Endothelial cell of umbilical vein (primary cell): ENCODE measurements at regions of chr2 and their contacts with region 1.

Region 1: DNA sequence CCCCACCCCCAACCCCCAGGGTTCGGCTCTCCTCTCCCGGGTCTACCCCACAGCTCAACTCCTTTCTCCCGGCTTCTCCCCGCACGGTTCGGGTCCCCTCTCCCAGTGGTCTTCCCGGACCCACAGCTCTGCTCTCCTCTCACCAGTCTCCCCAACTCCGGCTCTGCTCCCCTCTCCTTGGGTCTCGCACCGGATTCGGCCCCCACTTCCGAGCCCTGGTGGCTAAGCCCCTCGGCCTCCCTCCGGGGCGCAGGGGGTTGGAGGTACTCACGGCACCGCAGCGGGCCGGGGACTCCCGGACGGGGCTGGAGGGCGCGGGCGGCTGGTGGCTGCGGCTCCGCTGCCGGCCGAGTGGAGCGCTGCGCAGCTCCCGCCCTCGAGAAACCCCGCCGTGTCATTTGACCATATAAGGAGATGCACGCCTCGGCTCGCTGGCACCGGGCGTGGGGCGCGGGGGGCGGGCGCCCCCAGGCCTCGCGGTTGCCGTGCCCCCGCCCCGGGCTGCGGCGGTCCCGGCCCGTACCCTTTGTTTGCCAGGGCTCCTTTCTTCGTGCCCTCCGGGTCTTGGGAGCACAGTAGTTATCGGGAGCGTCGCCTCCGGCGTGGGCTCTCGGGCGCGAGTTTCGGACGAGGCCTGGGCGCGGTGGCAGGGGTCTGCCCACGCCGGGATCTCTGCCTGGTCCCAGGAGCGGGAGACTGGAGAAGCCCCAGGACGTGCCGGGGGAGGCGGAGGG is at the start of gene FHL2:
- DNase-seq: peak; percentile 77
- H3K4me3 ChIP-seq: peak within 1 kb of the TSS; percentile 59 to 99 (median 99)
- H3K27ac ChIP-seq: peak within 1 kb of the TSS; percentile 92
- H3K4me1 ChIP-seq: peaks cover 43% of the 10 kb centered on the region
- H3K27me3 ChIP-seq: no peaks in the 10 kb centered on the region
- CTCF ChIP-seq: peak; percentile 40 to 62
- POLR2A ChIP-seq: peak; percentile 87
- total RNA-seq, gene FHL2: 178 and 197 TPM in 2 replicates

Region 2: GRCh38 chr2:105337124-105338019 is 61.5 kb before region 1 on chr2 and contains the start of gene C2orf49:
- CTCF ChIA-PET with region 1: no interaction called
- POLR2A ChIA-PET with region 1: no interaction called
- dilution Hi-C with region 1: no loop called
- intact Hi-C with region 1: loop called (anchors 2 kb)
- DNase-seq: peak; percentile 88
- H3K4me3 ChIP-seq: peak within 1 kb of the TSS; percentile 82 to 98 (median 93)
- H3K27ac ChIP-seq: peak within 1 kb of the TSS; percentile 95
- H3K4me1 ChIP-seq: peaks cover 22% of the 10 kb centered on the region
- H3K27me3 ChIP-seq: no peaks in the 10 kb centered on the region
- CTCF ChIP-seq: no peak
- POLR2A ChIP-seq: peak; percentile 7
- total RNA-seq, gene C2orf49: 15.0 and 16.0 TPM in 2 replicates

Region 3: DNA sequence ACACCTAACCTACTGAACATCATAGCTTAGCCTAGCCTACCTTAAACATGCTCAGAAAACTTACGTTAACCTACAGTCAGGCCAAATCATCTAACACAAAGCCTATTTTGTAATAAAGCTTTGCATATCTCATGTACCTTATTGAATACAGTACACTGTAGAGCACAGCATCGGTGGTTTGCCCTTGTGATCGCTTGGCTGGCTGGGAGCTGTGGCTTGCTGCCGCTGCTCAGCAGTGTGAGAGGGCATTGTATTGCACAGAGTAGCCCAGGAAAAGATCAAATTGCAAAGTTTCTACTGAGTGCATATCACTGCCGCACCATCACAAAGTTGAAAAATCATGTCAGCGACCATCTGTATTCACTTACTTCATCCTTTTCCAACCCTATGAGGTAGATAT is 283.5 kb after region 1 on chr2:
- CTCF ChIA-PET with region 1: no interaction called
- POLR2A ChIA-PET with region 1: no interaction called
- dilution Hi-C with region 1: no loop called
- intact Hi-C with region 1: no loop called
- DNase-seq: no peak
- H3K4me3 ChIP-seq: no peak overlapping the region
- H3K27ac ChIP-seq: no peak overlapping the region
- H3K4me1 ChIP-seq: no peaks in the 10 kb centered on the region
- H3K27me3 ChIP-seq: no peaks in the 10 kb centered on the region
- CTCF ChIP-seq: no peak
- POLR2A ChIP-seq: no peak